ENCODE measurements at regions of chr7 and their contacts with region 1.

Region 1: DNA sequence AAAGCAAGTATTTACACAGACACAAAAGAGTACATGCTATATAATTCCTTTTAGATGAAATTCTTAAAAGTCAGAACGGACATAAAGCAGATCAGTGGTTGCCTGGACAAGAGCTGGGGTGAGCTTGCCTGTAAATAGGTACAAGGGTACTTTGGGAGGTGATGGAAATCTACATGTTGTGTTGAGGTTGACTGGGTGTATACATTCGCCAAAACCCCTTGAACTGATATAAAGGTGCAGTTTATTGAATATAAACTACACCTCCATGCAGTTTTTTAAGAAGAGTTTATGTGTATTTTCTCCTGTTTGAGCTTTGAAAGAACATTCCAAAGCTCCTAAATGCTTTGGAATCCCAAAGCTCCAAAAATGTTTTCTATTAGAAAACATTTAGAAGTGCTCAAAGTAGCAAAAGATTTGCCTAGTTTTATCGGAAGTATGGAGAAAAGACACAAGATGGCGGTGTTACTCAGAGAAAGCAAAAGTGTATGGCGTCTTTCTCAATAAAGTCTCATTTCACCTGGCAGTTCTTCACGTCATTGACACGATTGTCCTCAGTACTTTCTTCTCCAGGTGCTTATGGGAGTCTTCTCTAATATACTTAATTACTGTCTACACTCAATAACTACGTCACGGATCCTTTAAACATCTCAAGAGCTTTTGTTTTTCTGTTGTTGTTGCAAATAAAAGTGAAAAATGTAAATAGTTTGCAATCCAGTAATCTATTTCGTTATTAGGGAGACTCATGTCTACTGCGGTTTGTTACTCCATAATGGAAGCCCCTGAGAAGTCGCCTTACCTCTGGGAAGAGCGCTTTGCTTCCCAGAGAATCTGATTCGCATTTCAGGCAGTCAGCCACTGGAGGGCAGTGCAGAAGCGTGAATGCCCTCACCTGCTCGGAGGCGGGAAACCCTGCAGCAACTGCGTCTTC is 14.7 kb upstream of the SEC61G start:
- DNase-seq: peak; percentile 38
- H3K4me3 ChIP-seq: peak overlapping the region; percentile 42
- CTCF ChIP-seq: peak; percentile 88

Region 2: DNA sequence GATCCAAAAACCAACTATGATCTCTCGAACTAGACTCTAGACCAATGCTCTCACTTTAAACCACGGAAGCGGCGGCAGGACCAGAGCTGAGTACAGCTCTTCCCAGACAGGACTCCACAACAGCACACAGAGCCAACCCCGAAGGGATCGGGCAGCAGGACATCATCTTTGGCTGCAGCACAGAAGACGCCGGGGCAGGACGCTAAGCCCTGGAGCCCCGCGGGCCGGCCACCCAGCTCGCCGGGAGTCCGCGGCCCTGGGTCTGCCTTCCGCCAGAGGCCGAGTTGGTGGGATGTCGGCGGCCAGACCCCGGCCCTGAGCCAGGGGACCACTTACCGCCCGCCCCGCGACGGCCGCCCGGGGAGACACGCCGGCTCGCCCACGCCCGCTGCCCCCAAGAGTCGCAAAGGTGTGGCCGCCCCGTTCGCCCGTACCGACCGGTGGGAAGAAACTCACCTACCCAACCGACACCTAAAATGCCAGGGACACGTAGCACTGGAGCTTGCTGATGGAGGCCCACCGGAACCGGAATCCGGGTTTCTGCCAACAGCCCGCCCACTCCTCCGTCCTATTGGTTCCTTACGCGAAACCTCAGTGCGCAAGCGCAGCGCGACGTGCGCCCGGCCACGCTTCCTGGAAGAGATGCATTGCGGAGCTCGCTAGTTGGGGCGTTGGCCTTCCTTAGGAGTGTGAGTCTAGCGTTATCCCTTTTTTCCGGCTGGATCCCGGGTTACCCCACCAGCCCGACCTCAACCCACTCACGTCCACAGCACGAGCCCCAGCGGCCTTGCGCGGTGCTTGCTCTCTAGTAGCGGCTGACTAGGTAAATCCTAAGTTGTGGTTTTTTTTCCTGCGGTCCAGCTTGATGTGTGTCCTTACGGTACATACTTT is 14.8 kb before region 1 on chr7 and contains the start of gene SEC61G:
- CTCF ChIA-PET with region 1: interaction called, 61 read pairs
- POLR2A ChIA-PET with region 1: interaction called, 5 read pairs
- DNase-seq: peak; percentile 87
- H3K4me3 ChIP-seq: peak within 1 kb of the TSS; percentile 86
- CTCF ChIP-seq: no peak

Region 3: DNA sequence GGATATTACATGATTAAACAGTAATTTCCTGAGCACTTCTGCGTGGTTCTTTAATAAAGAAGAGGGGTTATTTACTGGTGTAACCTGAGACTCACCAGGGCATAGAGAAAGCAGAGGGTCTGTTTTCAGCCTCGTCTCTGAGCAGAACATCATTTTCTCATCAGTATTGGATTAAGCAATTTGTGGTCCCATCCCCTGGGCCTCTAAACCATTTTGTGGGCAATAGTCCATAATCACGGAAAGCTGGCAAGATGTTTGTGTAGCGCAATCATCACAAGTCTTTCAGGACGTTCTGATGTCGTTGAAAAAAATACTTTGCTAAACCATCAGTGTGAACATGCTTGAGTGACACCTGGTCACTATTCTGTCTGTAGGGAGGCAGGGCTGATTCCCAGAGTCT is 22.4 kb after region 1 on chr7:
- CTCF ChIA-PET with region 1: interaction called, 12 read pairs
- POLR2A ChIA-PET with region 1: no interaction called
- DNase-seq: no peak
- H3K4me3 ChIP-seq: no peak overlapping the region
- CTCF ChIP-seq: no peak

Region 4: GRCh38 chr7:55018361-55019190 is 244.8 kb after region 1 on chr7 and contains the start of gene EGFR:
- CTCF ChIA-PET with region 1: interaction called, 19 read pairs
- POLR2A ChIA-PET with region 1: no interaction called
- DNase-seq: no peak
- H3K4me3 ChIP-seq: peak within 1 kb of the TSS; percentile 75
- CTCF ChIP-seq: no peak

Region 5: DNA sequence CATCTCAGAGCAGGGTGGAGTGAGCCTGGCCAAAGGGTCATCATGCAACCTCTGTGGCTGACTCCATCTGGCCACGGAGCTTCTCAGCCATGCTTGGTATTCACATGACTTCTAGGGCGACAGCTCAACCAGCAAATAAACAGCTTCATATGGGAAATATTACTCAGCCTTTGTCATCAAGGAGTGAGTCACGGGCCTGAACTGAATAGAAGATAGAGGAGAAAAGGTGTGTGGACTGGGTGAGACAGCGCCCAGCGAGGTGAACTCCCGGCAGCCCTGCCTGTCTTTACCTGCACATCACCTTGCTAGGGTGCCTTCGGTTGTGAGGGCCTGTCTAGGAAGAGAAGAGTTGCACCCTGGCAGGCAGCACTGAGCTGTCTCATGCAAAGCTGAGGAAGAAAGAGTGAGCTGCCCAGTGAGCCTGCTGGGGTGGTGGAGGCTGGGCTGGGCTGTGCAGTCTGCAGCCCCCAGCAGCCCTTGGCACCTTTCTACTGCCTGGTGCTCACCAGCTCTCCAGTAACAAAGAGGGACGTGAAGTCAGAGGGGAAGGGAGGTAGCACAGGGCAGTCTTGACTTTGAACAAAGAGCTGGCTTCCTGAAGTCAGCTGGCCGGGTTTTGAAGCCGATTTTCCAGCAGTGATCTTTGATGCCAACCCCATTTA is 359.3 kb after region 1 on chr7:
- CTCF ChIA-PET with region 1: interaction called, 21 read pairs
- POLR2A ChIA-PET with region 1: no interaction called
- DNase-seq: peak; percentile 89
- H3K4me3 ChIP-seq: no peak overlapping the region
- CTCF ChIP-seq: no peak

Region 6: GRCh38 chr7:55245271-55245723 is 471.6 kb after region 1 on chr7:
- CTCF ChIA-PET with region 1: interaction called, 18 read pairs
- POLR2A ChIA-PET with region 1: no interaction called
- DNase-seq: peak; percentile 46
- H3K4me3 ChIP-seq: no peak overlapping the region
- CTCF ChIP-seq: no peak

Region 7: GRCh38 chr7:55260671-55261385 is 487.1 kb after region 1 on chr7:
- CTCF ChIA-PET with region 1: interaction called, 555 read pairs
- POLR2A ChIA-PET with region 1: no interaction called
- DNase-seq: no peak
- H3K4me3 ChIP-seq: no peak overlapping the region
- CTCF ChIP-seq: no peak